Adrenal gland (tissue), 19 donors: ENCODE measurements at regions of chr2 and their contacts with region 1.

Region 1: DNA sequence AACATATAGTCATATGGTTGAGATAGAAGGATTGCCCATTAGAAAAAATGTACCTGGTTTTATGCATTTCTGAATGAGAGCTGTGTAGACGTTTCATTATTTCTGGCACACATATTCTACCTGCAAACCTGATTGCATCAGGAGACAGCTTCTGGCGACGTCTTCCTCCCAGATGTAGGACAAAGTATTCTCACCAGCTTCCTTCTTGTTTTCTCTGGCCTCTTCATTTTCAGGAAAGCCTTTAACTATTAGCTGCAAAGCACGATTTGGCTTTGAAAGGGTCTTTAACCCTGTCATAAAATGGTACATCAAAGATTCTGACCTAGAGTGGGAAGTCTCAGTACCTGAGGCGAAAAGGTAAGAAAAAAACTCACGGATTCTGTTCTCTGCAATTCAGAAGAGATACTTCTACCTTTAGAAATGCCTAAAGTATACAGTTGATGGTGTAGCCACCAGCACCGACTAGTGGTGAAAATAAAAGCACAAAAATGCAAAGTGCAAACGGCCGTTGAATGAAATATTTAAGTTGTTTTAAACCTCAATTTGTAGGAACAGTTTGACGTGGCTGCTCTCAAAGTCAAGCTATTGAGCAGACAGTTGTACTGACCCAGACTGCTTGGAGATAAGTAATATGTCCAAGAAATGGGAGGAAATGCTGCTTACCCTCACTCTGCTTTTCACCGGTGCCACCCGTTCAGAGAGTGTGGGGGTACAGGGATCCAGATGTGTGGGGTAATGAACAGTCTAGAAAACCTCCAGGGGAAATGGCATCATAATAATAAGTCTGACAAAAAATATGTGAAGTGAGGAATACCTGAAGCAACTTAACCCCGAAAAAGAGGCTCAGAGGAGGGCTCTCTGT is 20.2 kb downstream of the IL18RAP start:
- DNase-seq: peak in 3 of 7 donors; percentile 33 to 56 (median 36)
- H3K4me3 ChIP-seq: no peak overlapping the region
- H3K27ac ChIP-seq: no peak overlapping the region
- H3K4me1 ChIP-seq: no peaks in the 10 kb centered on the region
- H3K27me3 ChIP-seq: no peaks in the 10 kb centered on the region
- CTCF ChIP-seq: peak; percentile 50 to 69 (median 64)
- POLR2A ChIP-seq: no peak

Region 2: GRCh38 chr2:101873543-101873942 is 569.7 kb before region 1 on chr2:
- intact Hi-C with region 1: loop called in 1 of 2 experiments (anchors 10 kb)
- DNase-seq: no peak
- H3K4me3 ChIP-seq: no peak overlapping the region
- H3K27ac ChIP-seq: no peak overlapping the region
- H3K4me1 ChIP-seq: no peaks in the 10 kb centered on the region
- H3K27me3 ChIP-seq: no peaks in the 10 kb centered on the region
- CTCF ChIP-seq: peak in 4 of 6 experiments; percentile 8 to 30 (median 19)
- POLR2A ChIP-seq: no peak

Region 3: GRCh38 chr2:102240640-102241370 is 202.4 kb before region 1 on chr2:
- intact Hi-C with region 1: loop called in 1 of 2 experiments (anchors 10 kb)
- DNase-seq: peak; percentile 92 to 97 (median 95)
- H3K4me3 ChIP-seq: peak overlapping the region in 1 of 4 donors; percentile 36
- H3K27ac ChIP-seq: peak overlapping the region; percentile 83 to 93 (median 86)
- H3K4me1 ChIP-seq: peaks cover 0 to 6% of the 10 kb centered on the region in 2 donors
- H3K27me3 ChIP-seq: no peaks in the 10 kb centered on the region
- CTCF ChIP-seq: peak; percentile 96 to 99 (median 98)
- POLR2A ChIP-seq: peak in 1 of 2 donors; percentile 53

Region 4: GRCh38 chr2:102575888-102576287 is 132.7 kb after region 1 on chr2:
- intact Hi-C with region 1: no loop called
- DNase-seq: no peak
- H3K4me3 ChIP-seq: no peak overlapping the region
- H3K27ac ChIP-seq: no peak overlapping the region
- H3K4me1 ChIP-seq: no peaks in the 10 kb centered on the region
- H3K27me3 ChIP-seq: no peaks in the 10 kb centered on the region
- CTCF ChIP-seq: no peak
- POLR2A ChIP-seq: no peak